CD8-positive, alpha-beta T cell (primary cell): ENCODE measurements at regions of chr10 and their contacts with region 1.

Region 1: DNA sequence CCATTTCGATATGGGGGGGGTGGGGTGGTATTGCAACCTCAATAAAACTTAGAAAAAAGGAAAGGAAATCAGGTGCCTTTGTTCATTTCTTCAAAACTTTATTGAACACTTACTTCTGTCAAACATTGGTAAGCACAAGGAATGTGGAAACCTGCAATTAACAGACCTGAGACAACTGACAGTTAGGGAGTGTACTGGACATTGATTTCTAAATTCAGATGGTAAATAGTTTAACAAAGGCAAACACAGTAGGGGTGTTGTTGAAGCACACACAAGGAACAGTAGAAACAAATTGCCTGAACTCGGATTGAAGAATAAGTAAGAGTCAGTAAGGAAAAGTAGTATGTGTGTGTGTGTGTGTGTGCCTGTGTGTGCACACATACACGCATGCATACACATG is 108.6 kb downstream of the CSTF2T start:
- DNase-seq: no peak
- ATAC-seq: no peak
- H3K4me3 ChIP-seq: no peak overlapping the region
- H3K4me3 Mint-ChIP-seq: no peak overlapping the region
- H3K27ac ChIP-seq: no peak overlapping the region
- H3K27ac Mint-ChIP-seq: no peak overlapping the region
- H3K4me1 ChIP-seq: no peaks in the 10 kb centered on the region
- H3K4me1 Mint-ChIP-seq: no peaks in the 10 kb centered on the region
- H3K27me3 ChIP-seq: no peaks in the 10 kb centered on the region
- H3K27me3 Mint-ChIP-seq: no peaks in the 10 kb centered on the region
- CTCF ChIP-seq: no peak

Region 2: DNA sequence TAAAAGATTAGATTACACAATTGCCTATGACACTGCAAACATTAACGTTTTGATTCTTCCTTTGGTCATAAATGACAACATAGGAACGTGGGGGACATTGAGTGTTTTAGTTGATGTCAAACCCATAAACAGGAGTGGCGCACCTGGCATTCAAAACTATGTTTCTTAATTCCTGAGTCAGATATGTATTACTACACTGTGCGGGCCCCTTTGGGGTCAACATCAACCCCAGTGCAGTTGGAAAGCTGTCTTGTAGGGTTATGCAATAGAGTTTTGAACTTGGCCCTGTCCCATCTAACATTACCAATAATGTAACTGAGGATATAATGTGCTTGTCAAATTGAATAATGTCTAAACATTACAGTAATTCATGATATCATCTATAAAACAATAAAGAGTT is 47.9 kb before region 1 on chr10:
- CTCF ChIA-PET with region 1: no interaction called
- POLR2A ChIA-PET with region 1: no interaction called
- intact Hi-C with region 1: loop called in 1 of 2 experiments (anchors 5 kb)
- DNase-seq: no peak
- ATAC-seq: no peak
- H3K4me3 ChIP-seq: no peak overlapping the region
- H3K4me3 Mint-ChIP-seq: no peak overlapping the region
- H3K27ac ChIP-seq: no peak overlapping the region
- H3K27ac Mint-ChIP-seq: no peak overlapping the region
- H3K4me1 ChIP-seq: no peaks in the 10 kb centered on the region
- H3K4me1 Mint-ChIP-seq: no peaks in the 10 kb centered on the region
- H3K27me3 ChIP-seq: no peaks in the 10 kb centered on the region
- H3K27me3 Mint-ChIP-seq: no peaks in the 10 kb centered on the region
- CTCF ChIP-seq: no peak

Region 3: GRCh38 chr10:51683031-51683691 is 92.4 kb after region 1 on chr10:
- CTCF ChIA-PET with region 1: no interaction called
- POLR2A ChIA-PET with region 1: no interaction called
- intact Hi-C with region 1: no loop called
- DNase-seq: no peak
- ATAC-seq: no peak
- H3K4me3 ChIP-seq: no peak overlapping the region
- H3K4me3 Mint-ChIP-seq: no peak overlapping the region
- H3K27ac ChIP-seq: no peak overlapping the region
- H3K27ac Mint-ChIP-seq: no peak overlapping the region
- H3K4me1 ChIP-seq: no peaks in the 10 kb centered on the region
- H3K4me1 Mint-ChIP-seq: no peaks in the 10 kb centered on the region
- H3K27me3 ChIP-seq: peaks cover 0 to 2% of the 10 kb centered on the region in 2 experiments
- H3K27me3 Mint-ChIP-seq: peaks cover 39% of the 10 kb centered on the region
- CTCF ChIP-seq: no peak